CD4-positive, alpha-beta T cell (primary cell): ENCODE measurements at regions of chr18 and their contacts with region 1.

Region 1: DNA sequence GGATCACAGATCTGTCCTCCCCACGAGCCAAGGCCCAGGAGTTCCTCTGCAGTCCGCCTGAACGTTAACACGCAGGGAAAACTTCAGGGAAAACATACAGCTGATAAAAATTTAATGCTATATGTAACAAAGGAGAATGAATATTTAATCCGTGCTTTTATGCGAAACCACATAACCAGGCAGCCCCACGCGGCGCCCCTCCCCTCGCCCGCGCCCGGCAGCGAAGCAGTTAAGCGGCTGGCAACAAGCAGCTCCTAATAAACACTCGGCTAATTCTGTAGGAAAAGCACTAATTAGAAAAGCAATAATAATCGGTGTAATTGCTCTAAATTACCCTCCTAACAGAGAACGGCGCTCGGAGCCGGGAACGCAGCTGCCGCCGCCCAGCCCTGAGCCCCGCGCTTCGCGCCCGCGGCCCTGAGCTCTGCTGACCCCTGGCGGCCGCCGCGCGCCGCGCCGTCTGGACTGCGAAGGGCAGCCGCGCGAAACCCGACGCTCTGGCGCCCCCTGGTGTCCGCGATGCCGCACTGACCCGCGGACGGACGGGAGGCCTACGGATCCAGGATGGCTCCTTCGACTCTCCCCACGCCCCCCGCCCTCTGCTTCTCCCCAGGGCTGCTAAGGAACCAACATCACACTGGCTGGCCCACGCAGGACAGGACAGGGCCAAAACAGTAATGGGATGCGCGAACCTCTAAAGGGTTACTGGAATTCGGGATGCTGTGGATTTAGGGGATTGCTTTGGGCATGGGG is 181.4 kb downstream of the SMAD2 start:
- DNase-seq: peak; percentile 59 to 93 (median 81)
- ATAC-seq: peak; percentile 99
- H3K4me3 ChIP-seq: peak overlapping the region; percentile 24
- H3K4me3 Mint-ChIP-seq: no peak overlapping the region
- H3K27ac ChIP-seq: no peak overlapping the region
- H3K27ac Mint-ChIP-seq: no peak overlapping the region
- H3K4me1 ChIP-seq: peaks cover 10% of the 10 kb centered on the region
- H3K4me1 Mint-ChIP-seq: no peaks in the 10 kb centered on the region
- H3K27me3 ChIP-seq: peaks cover 6 to 12% of the 10 kb centered on the region in 2 experiments
- H3K27me3 Mint-ChIP-seq: peaks cover 4% of the 10 kb centered on the region
- CTCF ChIP-seq: peak; percentile 100

Region 2: DNA sequence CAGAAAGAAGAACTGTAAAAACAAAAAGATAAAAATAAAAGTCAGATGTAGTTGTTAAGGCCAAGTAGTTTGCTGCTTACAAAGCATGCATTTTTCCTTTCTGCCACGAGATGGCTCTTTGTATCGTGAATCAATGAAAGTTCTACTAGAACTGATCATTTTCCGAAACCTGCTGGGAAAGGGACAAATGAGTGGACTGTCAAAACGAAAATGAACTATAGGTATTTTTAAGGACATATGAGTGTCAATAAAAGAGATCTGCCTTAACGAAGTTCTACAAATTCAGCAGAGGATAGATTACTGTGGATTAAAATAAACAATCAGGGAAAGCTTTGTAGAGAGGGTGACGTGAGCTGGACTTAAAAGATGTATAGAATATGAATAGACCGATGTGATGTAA is 698.6 kb before region 1 on chr18:
- CTCF ChIA-PET with region 1: interaction called, 3 read pairs
- POLR2A ChIA-PET with region 1: no interaction called
- intact Hi-C with region 1: loop called (anchors 1 to 2 kb)
- DNase-seq: peak in 4 of 14 experiments; percentile 11 to 48 (median 30)
- ATAC-seq: no peak
- H3K4me3 ChIP-seq: no peak overlapping the region
- H3K4me3 Mint-ChIP-seq: no peak overlapping the region
- H3K27ac ChIP-seq: no peak overlapping the region
- H3K27ac Mint-ChIP-seq: no peak overlapping the region
- H3K4me1 ChIP-seq: no peaks in the 10 kb centered on the region
- H3K4me1 Mint-ChIP-seq: no peaks in the 10 kb centered on the region
- H3K27me3 ChIP-seq: no peaks in the 10 kb centered on the region
- H3K27me3 Mint-ChIP-seq: no peaks in the 10 kb centered on the region
- CTCF ChIP-seq: peak; percentile 66

Region 3: DNA sequence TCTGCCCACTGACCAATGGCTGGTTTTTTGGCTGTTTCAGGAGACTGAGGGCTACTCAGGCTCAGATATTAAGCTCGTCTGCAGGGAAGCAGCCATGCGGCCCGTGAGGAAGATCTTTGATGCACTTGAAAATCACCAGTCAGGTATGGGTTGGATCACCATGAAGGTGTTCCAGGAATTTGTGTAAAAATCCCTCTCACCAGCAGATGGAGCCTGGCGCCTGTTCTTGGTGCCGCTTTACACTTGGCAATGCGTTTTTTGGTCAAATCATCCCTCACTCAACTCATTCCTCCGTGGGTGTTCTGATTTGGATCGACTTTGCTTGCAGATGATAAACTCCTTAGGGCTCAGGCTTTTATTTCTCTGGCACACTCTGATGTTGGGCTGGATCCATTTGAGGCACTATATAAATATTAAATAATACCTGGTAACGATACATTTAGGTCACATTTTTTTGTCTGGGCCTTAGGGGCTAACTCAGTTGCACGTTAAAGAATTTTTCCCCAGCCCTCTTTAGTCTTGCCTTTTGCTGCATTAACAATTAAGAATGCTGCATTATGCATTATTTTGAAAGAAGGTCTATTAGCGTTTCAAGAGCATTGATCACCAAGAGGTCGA is 648.7 kb before region 1 on chr18:
- CTCF ChIA-PET with region 1: interaction called, 11 read pairs
- POLR2A ChIA-PET with region 1: no interaction called
- intact Hi-C with region 1: loop called (anchors 1 kb)
- DNase-seq: peak; percentile 31 to 70 (median 50)
- ATAC-seq: peak; percentile 49
- H3K4me3 ChIP-seq: no peak overlapping the region
- H3K4me3 Mint-ChIP-seq: no peak overlapping the region
- H3K27ac ChIP-seq: no peak overlapping the region
- H3K27ac Mint-ChIP-seq: no peak overlapping the region
- H3K4me1 ChIP-seq: no peaks in the 10 kb centered on the region
- H3K4me1 Mint-ChIP-seq: no peaks in the 10 kb centered on the region
- H3K27me3 ChIP-seq: no peaks in the 10 kb centered on the region
- H3K27me3 Mint-ChIP-seq: no peaks in the 10 kb centered on the region
- CTCF ChIP-seq: peak; percentile 86

Region 4: GRCh38 chr18:47175908-47176575 is 573.0 kb before region 1 on chr18 and contains the start of gene IER3IP1:
- CTCF ChIA-PET with region 1: no interaction called
- POLR2A ChIA-PET with region 1: no interaction called
- intact Hi-C with region 1: loop called in 1 of 2 experiments (anchors 1 kb)
- DNase-seq: peak; percentile 79 to 91 (median 84)
- ATAC-seq: peak; percentile 93
- H3K4me3 ChIP-seq: peak within 1 kb of the TSS; percentile 98
- H3K4me3 Mint-ChIP-seq: peak within 1 kb of the TSS; percentile 77
- H3K27ac ChIP-seq: no peak within 1 kb of the TSS
- H3K27ac Mint-ChIP-seq: no peak within 1 kb of the TSS
- H3K4me1 ChIP-seq: peaks cover 19% of the 10 kb centered on the region
- H3K4me1 Mint-ChIP-seq: no peaks in the 10 kb centered on the region
- H3K27me3 ChIP-seq: no peaks in the 10 kb centered on the region
- H3K27me3 Mint-ChIP-seq: no peaks in the 10 kb centered on the region
- CTCF ChIP-seq: no peak
- total RNA-seq, gene IER3IP1: 1.5 to 2.3 TPM

Region 5: DNA sequence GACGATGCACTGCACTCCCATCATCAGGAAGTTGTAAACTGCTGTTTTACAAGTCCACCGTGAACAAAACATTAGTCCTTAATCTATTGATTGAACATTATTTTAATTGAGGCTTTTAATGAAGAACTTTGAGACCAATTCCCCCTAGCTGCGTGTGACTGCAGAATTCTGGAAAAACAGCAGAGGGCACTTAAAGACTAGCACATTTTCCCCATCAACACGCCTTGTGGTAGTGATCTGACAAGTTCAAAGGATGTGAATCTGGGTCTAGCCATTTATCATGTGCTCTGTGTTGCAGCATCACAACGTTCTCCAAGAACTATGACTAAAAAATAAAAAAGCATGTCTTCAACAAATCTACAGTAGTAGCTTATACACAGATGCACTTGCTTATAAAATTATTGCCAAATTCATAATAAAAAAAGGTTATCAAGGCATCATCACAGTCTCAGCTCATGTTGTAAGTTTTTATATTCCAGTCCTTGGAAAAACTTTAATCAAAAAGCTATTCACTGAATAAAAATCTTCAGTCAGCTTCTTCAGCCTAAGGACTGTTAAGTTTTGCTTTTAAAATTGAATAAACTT is 533.4 kb before region 1 on chr18:
- CTCF ChIA-PET with region 1: interaction called, 3 read pairs
- POLR2A ChIA-PET with region 1: no interaction called
- intact Hi-C with region 1: loop called (anchors 2 to 5 kb)
- DNase-seq: peak in 4 of 14 experiments; percentile 7 to 43 (median 26)
- ATAC-seq: no peak
- H3K4me3 ChIP-seq: no peak overlapping the region
- H3K4me3 Mint-ChIP-seq: no peak overlapping the region
- H3K27ac ChIP-seq: no peak overlapping the region
- H3K27ac Mint-ChIP-seq: no peak overlapping the region
- H3K4me1 ChIP-seq: no peaks in the 10 kb centered on the region
- H3K4me1 Mint-ChIP-seq: no peaks in the 10 kb centered on the region
- H3K27me3 ChIP-seq: peaks cover 4 to 24% of the 10 kb centered on the region in 2 experiments
- H3K27me3 Mint-ChIP-seq: peaks cover 66% of the 10 kb centered on the region
- CTCF ChIP-seq: no peak

Region 6: DNA sequence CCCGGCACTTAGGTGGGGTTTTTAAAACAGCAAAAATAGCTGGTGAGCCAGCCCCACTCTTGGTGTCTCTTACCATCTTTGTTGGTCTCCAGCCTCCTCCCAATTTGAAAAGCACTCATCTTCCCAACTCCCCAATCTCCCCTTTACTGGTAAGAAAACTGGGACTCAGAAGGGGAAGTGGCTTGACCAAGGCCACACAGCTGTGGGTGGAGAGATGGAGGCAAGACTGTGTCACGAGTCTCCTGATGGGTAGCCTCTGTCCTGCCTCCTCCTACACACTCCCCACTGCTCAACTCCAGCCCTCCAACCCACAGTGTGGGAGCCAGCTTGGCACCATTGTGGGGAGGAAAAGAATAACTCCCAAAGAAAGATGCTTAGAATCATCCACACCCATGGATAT is 41.0 kb after region 1 on chr18:
- CTCF ChIA-PET with region 1: no interaction called
- POLR2A ChIA-PET with region 1: no interaction called
- intact Hi-C with region 1: no loop called
- DNase-seq: no peak
- ATAC-seq: no peak
- H3K4me3 ChIP-seq: no peak overlapping the region
- H3K4me3 Mint-ChIP-seq: no peak overlapping the region
- H3K27ac ChIP-seq: no peak overlapping the region
- H3K27ac Mint-ChIP-seq: no peak overlapping the region
- H3K4me1 ChIP-seq: no peaks in the 10 kb centered on the region
- H3K4me1 Mint-ChIP-seq: no peaks in the 10 kb centered on the region
- H3K27me3 ChIP-seq: peaks cover 0 to 2% of the 10 kb centered on the region in 2 experiments
- H3K27me3 Mint-ChIP-seq: peaks cover 24% of the 10 kb centered on the region
- CTCF ChIP-seq: no peak

Region 7: DNA sequence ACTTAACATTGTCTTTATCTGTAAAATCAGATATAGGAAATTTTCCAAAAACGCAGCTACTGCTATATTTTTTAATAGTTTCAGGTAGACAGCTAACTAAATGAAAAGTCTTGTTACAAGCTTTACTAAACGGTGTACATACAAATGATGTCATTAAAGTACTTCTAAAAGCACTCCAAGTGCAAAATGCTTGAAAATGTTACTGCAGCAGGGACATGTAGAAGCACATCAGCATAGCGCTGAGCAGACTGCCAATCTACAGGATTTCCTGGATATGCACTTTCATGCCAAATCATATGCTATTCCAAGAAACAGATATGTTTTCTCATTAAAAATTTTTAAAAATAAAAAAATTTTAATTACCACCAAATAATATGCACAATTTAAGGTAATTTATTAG is 119.7 kb after region 1 on chr18:
- CTCF ChIA-PET with region 1: no interaction called
- POLR2A ChIA-PET with region 1: no interaction called
- intact Hi-C with region 1: no loop called
- DNase-seq: no peak
- ATAC-seq: no peak
- H3K4me3 ChIP-seq: no peak overlapping the region
- H3K4me3 Mint-ChIP-seq: no peak overlapping the region
- H3K27ac ChIP-seq: no peak overlapping the region
- H3K27ac Mint-ChIP-seq: no peak overlapping the region
- H3K4me1 ChIP-seq: peaks cover 3% of the 10 kb centered on the region
- H3K4me1 Mint-ChIP-seq: peaks cover 26% of the 10 kb centered on the region
- H3K27me3 ChIP-seq: no peaks in the 10 kb centered on the region
- H3K27me3 Mint-ChIP-seq: no peaks in the 10 kb centered on the region
- CTCF ChIP-seq: no peak

Region 8: GRCh38 chr18:48928787-48929186 is 1179.8 kb after region 1 on chr18:
- CTCF ChIA-PET with region 1: no interaction called
- POLR2A ChIA-PET with region 1: no interaction called
- intact Hi-C with region 1: no loop called
- DNase-seq: peak; percentile 54 to 93 (median 80)
- ATAC-seq: peak; percentile 89
- H3K4me3 ChIP-seq: peak overlapping the region; percentile 31
- H3K4me3 Mint-ChIP-seq: peak overlapping the region; percentile 86
- H3K27ac ChIP-seq: peak overlapping the region in 1 of 2 donors; percentile 24
- H3K27ac Mint-ChIP-seq: peak overlapping the region; percentile 84
- H3K4me1 ChIP-seq: peaks cover 94% of the 10 kb centered on the region
- H3K4me1 Mint-ChIP-seq: peaks cover 97% of the 10 kb centered on the region
- H3K27me3 ChIP-seq: no peaks in the 10 kb centered on the region
- H3K27me3 Mint-ChIP-seq: no peaks in the 10 kb centered on the region
- CTCF ChIP-seq: no peak